OCI-LY7 (cell line): ENCODE measurements at regions of chr3 and their contacts with region 1.

Region 1: GRCh38 chr3:71389911-71390573 is 193.5 kb downstream of the FOXP1 start:
- DNase-seq: peak; percentile 59
- H3K4me3 ChIP-seq: peak overlapping the region; percentile 46
- H3K27ac ChIP-seq: peak overlapping the region; percentile 90
- H3K4me1 ChIP-seq: peaks cover 78% of the 10 kb centered on the region
- CTCF ChIP-seq: no peak

Region 2: GRCh38 chr3:71064288-71064955 is 325.6 kb before region 1 on chr3:
- CTCF ChIA-PET with region 1: no interaction called
- POLR2A ChIA-PET with region 1: no interaction called
- intact Hi-C with region 1: loop called (anchors 2 kb)
- DNase-seq: peak; percentile 57
- H3K4me3 ChIP-seq: peak overlapping the region; percentile 70
- H3K27ac ChIP-seq: peak overlapping the region; percentile 48
- H3K4me1 ChIP-seq: peaks cover 63% of the 10 kb centered on the region
- CTCF ChIP-seq: no peak

Region 3: GRCh38 chr3:71369701-71370391 is 20.2 kb before region 1 on chr3:
- CTCF ChIA-PET with region 1: no interaction called
- POLR2A ChIA-PET with region 1: interaction called, 54 read pairs
- intact Hi-C with region 1: no loop called
- DNase-seq: no peak
- H3K4me3 ChIP-seq: no peak overlapping the region
- H3K27ac ChIP-seq: no peak overlapping the region
- H3K4me1 ChIP-seq: peaks cover 24% of the 10 kb centered on the region
- CTCF ChIP-seq: no peak

Region 4: DNA sequence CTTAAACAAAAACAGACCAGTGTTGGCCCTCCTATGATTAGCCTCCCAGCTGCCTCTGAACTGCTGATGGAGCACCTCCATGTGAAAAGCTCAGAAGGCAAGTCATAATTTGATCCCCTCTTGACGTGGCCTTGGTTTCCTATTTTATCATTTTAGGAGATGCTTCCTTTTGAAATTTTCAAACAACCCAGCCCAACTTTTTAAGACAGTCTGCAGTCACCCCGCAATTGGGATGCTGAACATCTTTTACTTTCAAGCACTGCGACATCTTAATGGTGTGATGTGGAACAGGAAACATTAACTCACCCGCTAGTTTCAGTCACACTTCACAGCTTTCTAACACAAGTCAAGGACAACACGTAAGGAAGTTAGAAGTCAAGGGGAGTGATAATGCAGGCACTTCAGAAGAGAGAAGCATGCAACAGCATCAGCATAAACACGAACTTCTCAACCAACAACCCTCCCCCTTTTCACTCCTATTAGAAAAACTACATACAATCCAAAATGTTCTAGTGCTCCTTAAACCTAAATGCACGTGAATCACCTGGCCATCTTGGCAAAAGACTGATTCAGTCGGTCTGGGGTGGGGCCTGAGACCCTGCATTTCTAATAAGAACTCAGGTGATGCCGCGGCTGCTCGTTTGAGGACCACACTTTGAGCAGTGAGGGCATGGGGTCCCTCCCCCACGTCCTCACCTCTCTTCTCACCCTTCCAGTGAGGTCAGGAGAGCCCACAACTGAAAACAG is 32.0 kb after region 1 on chr3:
- CTCF ChIA-PET with region 1: no interaction called
- POLR2A ChIA-PET with region 1: interaction called, 7 read pairs
- intact Hi-C with region 1: loop called (anchors 1 kb)
- DNase-seq: peak; percentile 90
- H3K4me3 ChIP-seq: peak overlapping the region; percentile 64
- H3K27ac ChIP-seq: peak overlapping the region; percentile 98
- H3K4me1 ChIP-seq: peaks cover 93% of the 10 kb centered on the region
- CTCF ChIP-seq: no peak

Region 5: GRCh38 chr3:71456156-71456555 is 66.1 kb after region 1 on chr3:
- CTCF ChIA-PET with region 1: no interaction called
- POLR2A ChIA-PET with region 1: interaction called, 12 read pairs
- intact Hi-C with region 1: loop called (anchors 2 kb)
- DNase-seq: peak; percentile 78
- H3K4me3 ChIP-seq: peak overlapping the region; percentile 63
- H3K27ac ChIP-seq: peak overlapping the region; percentile 92
- H3K4me1 ChIP-seq: peaks cover 82% of the 10 kb centered on the region
- CTCF ChIP-seq: peak; percentile 60